Left colon (tissue), 2 donors: ENCODE measurements at regions of chr14 and their contacts with region 1.

Region 1: DNA sequence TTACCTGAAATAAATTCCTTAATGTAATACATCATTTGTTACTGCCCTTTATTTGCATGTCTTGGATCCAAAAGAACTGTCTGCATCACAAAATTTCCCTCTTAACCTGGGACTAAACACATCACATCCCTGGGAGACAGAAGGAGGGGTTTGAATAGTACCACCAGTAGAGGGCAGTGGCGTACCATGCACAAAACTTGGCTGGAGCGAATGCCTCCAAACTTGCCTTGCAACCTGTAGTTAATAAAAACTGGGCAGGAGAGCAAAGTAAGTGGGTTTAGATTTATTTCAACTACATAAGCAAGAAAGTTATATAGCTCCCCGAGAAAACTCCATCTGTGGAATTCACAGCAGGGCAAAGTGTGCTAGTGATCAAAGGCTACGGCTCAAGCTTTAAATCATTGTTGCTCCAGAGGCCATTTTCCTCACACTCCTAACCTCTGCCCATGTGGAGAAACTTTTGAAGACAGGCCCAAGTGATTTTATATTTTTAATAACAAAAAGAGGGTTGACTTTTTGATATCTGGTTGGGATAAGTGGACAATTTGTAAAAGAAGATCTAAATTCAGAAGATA is 1176.7 kb upstream of the SEL1L start:
- DNase-seq: peak; percentile 24 to 34
- ATAC-seq: no peak

Region 2: GRCh38 chr14:82897469-82898308 is 187.3 kb after region 1 on chr14:
- intact Hi-C with region 1: loop called in 1 of 2 experiments (anchors 5 kb)
- DNase-seq: no peak
- ATAC-seq: no peak